ENCODE measurements at regions of chr20 and their contacts with region 1.

Region 1: DNA sequence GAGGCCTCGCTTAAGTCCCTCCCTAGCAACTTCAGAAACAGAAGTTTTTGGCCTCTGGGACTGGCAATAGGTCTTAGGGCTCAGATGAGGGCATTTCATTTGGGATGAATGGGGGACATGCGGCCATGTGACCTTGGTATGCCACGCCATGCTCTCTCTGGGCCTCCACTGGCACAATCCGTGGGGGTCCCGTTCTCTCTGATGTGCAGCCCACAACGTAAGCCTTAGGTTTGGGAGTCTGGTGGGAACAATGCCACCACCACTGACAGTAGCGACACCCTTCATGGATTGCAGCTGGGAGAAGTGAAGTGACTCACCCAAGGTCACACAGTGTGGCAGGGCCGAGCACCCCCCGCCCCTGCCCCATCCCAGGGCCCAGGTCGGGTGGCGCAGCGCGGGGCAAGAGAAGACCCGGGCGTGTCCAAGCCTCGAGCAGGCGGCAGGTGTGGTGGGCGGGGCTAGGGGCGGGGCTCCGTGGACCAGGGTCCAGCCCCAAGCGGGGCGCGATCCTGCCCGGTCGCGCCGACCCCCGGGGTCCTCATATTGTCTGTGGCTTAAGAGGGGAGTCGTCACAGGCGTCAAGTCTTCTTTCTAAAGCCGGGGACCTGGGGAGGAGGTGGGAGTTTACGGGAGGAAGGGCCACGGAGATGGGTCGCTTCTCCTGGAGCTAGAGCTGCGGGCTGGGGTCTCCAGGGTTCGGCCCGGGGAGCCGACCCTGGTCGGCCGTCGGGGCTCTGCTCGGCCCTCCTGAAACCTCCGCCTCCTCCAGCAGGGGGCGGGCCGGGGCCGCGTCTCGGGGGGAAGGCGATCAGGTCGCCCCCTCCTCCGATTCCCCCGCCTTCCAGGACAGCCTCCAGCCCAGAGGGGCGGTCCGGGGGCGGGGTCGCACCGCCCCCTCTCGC is 698 bp upstream of the CEBPB start:
- DNase-seq: peak; percentile 91 to 93 (median 91)
- ATAC-seq: peak; percentile 76
- H3K4me3 ChIP-seq: peak overlapping the region; percentile 63
- H3K4me1 ChIP-seq: peaks cover 18% of the 10 kb centered on the region
- CTCF ChIP-seq: peak; percentile 45

Region 2: GRCh38 chr20:50286609-50287008 is 96.7 kb after region 1 on chr20:
- intact Hi-C with region 1: loop called in 1 of 2 experiments (anchors 10 kb)
- DNase-seq: peak in 1 of 3 donors; percentile 59
- ATAC-seq: no peak
- H3K4me3 ChIP-seq: no peak overlapping the region
- H3K4me1 ChIP-seq: peaks cover 13% of the 10 kb centered on the region
- CTCF ChIP-seq: no peak

Region 3: DNA sequence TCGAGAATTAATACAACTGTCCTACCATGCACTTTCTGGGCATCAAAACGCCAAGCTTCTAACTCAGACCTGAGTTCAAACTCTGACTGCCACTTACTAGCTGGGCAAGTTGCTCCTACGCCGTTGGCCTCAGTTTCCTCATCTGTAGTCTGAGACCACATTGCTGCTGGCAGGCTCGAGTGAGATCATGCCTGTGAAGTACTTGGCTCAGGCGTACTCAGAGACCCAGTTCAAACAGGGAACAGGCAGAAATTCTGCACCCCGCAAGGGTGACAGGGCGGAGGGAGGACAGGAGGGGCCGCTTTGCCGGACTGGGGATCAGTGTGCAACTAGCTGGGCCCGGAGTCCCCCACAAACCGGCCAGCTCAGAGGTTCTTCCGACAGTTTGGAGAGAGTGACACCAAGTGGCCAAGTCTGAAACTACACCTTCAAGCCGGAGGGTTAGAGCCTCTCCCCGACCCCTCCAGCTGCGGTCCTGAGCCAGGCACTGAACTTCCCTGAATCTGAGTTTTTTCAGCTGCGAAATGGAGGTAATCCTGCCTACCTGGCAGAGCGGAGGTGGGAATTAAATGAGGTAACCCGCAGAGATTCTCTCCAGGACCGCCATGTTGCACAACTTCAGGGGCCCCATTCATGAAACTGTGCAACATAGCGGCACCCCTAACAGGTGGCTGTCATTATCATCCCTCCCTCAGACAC is 274.2 kb after region 1 on chr20:
- intact Hi-C with region 1: loop called (anchors 2 to 5 kb)
- DNase-seq: peak; percentile 47 to 67 (median 62)
- ATAC-seq: peak; percentile 65
- H3K4me3 ChIP-seq: no peak overlapping the region
- H3K4me1 ChIP-seq: no peaks in the 10 kb centered on the region
- CTCF ChIP-seq: peak; percentile 63

Region 4: DNA sequence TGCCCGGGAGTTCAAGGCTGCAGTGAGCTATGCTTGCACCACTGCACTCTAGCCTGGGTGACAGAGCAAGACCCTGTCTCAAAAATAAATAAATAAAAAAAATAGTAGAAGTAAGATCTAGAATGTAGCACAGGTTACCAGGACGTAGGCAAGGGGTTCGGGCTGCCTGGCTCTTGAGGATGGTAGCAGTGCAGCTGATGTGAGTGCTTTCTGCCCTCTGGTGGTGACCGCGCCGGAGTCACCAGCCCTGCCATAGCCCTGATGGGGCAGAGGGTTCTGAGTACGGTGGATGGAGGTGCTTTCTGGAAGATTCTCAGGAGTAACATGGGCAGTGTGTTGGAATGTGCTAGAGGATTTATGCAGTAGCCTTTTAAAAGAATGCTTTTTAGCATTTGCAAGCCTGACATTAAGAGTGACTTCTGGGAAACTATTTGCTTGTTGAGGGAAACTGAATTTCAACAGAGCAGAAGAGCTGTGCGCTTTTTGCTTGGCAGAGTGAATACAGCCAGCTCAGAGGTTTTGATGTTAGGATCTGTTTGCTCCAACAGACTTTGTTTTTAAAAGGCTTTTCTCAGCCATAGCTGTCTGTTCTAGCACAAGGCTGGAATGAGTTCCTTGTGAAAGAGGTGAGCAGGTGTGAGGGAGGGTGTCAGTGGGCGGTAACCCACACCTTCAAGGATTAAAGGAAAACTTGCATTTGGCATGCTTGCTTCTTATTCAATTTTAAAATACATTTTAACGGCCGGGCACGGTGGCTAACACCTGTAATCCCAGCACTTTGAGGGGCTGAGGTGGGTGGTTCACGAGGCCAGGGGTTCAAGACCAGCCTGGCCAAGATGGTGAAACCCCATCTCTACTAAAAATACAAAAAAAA is 386.2 kb after region 1 on chr20:
- intact Hi-C with region 1: loop called in 1 of 2 experiments (anchors 5 kb)
- DNase-seq: peak in 2 of 3 donors; percentile 82 to 88
- ATAC-seq: peak; percentile 66
- H3K4me3 ChIP-seq: no peak overlapping the region
- H3K4me1 ChIP-seq: peaks cover 18% of the 10 kb centered on the region
- CTCF ChIP-seq: peak; percentile 34

Measured in mucosa of descending colon (tissue), 3 donors.